HCT116 (cell line): ENCODE measurements at regions of chr9 and their contacts with region 1.

Region 1: GRCh38 chr9:70362952-70363351 is 51.5 kb downstream of the KLF9 start:
- DNase-seq: no peak
- ATAC-seq: no peak
- H3K4me3 ChIP-seq: no peak overlapping the region
- H3K27ac ChIP-seq: no peak overlapping the region
- H3K4me1 ChIP-seq: no peaks in the 10 kb centered on the region
- H3K27me3 ChIP-seq: no peaks in the 10 kb centered on the region
- CTCF ChIP-seq: no peak
- POLR2A ChIP-seq: no peak
- RAD21 ChIP-seq: no peak

Region 2: DNA sequence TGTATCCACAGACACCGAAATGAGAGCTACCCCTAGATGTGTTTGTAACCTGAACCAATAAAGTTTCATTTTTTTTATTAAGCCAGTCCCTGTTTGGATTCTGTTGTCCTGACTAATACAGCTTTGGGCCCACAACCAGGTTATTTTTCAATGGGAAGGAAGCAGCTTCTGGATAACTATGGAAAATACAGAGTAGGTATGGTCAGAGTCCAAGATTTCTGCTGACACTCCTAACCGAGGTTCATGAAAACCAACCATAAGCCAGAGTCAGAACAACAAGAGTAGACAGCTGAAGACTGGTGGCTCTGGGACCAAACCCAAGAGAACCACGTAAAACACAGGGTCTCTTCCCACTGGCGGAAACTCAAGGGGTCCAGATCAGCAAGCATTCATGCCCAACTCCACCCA is 40.7 kb after region 1 on chr9:
- CTCF ChIA-PET with region 1: no interaction called
- POLR2A ChIA-PET with region 1: no interaction called
- RAD21 ChIA-PET with region 1: no interaction called
- intact Hi-C with region 1: loop called (anchors 1 kb)
- DNase-seq: no peak
- ATAC-seq: no peak
- H3K4me3 ChIP-seq: no peak overlapping the region
- H3K27ac ChIP-seq: no peak overlapping the region
- H3K4me1 ChIP-seq: peaks cover 2 to 16% of the 10 kb centered on the region in 2 experiments; a peak in 2 of 4 replicates
- H3K27me3 ChIP-seq: no peaks in the 10 kb centered on the region
- CTCF ChIP-seq: no peak
- POLR2A ChIP-seq: no peak
- RAD21 ChIP-seq: no peak